GM12878 (cell line): ENCODE measurements at regions of chr20 and their contacts with region 1.

Region 1: GRCh38 chr20:38962044-38962927 is at the start of gene DHX35:
- DNase-seq: peak; percentile 91
- ATAC-seq: peak; percentile 98
- H3K4me3 ChIP-seq: peak within 1 kb of the TSS; percentile 88
- H3K27ac ChIP-seq: peak within 1 kb of the TSS; percentile 91
- H3K4me1 ChIP-seq: no peaks in the 10 kb centered on the region
- H3K27me3 ChIP-seq: no peaks in the 10 kb centered on the region
- CTCF ChIP-seq: peak; percentile 19 to 50 (median 38); a peak in 4 of 6 replicates
- EP300 ChIP-seq: peak in 1 of 2 experiments; percentile 34; a peak in 1 of 4 replicates
- POLR2A ChIP-seq: peak; percentile 90
- RAD21 ChIP-seq: peak; percentile 45; the same call in 1 of the 2 replicates
- polyA plus RNA-seq, gene DHX35: 4.3 to 4.4 TPM

Region 2: DNA sequence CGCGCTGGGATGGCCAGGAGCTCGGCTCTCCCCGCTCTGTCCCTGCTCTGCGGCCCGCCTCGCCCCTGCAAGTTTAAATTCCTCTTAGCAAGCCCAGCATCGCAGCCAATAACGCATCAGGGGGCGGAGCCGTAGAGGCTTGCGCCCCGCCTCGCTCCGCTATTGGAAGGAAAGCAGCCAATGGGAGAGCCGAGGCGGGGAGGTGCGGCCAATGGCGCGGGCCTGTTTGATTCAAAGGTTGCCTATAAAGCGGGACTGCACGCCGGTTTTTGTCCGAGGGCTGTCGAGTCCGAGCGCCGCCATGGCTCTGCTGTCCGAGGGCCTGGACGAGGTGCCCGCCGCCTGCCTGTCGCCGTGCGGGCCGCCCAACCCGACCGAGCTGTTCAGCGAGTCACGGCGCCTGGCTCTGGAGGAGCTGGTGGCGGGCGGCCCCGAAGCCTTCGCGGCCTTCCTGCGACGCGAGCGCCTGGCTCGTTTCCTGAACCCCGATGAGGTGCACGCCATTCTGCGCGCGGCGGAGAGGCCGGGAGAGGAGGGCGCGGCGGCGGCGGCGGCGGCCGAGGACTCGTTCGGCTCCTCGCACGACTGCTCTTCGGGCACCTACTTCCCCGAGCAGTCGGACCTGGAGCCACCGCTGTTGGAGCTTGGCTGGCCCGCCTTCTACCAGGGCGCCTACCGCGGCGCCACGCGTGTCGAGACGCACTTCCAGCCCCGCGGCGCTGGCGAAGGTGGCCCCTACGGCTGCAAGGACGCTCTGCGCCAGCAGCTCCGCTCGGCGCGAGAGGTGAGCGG is 35.9 kb before region 1 on chr20 and contains the start of gene FAM83D:
- CTCF ChIA-PET with region 1: interaction called, 24 read pairs
- POLR2A ChIA-PET with region 1: interaction called, 21 read pairs
- RAD21 ChIA-PET with region 1: interaction called, 66 read pairs
- SMC1A ChIA-PET with region 1: interaction called, 37 read pairs
- in situ Hi-C with region 1: no loop called
- intact Hi-C with region 1: no loop called
- DNase-seq: peak; percentile 92
- ATAC-seq: peak; percentile 96
- H3K4me3 ChIP-seq: peak within 1 kb of the TSS; percentile 78
- H3K27ac ChIP-seq: peak within 1 kb of the TSS; percentile 78
- H3K4me1 ChIP-seq: peaks cover 12% of the 10 kb centered on the region
- H3K27me3 ChIP-seq: no peaks in the 10 kb centered on the region
- CTCF ChIP-seq: no peak; a peak in 2 of 6 replicates
- EP300 ChIP-seq: no peak
- POLR2A ChIP-seq: peak; percentile 99
- RAD21 ChIP-seq: no peak; the same call in 1 of the 2 replicates
- polyA plus RNA-seq, gene FAM83D: 4.5 to 6.0 TPM

Region 3: DNA sequence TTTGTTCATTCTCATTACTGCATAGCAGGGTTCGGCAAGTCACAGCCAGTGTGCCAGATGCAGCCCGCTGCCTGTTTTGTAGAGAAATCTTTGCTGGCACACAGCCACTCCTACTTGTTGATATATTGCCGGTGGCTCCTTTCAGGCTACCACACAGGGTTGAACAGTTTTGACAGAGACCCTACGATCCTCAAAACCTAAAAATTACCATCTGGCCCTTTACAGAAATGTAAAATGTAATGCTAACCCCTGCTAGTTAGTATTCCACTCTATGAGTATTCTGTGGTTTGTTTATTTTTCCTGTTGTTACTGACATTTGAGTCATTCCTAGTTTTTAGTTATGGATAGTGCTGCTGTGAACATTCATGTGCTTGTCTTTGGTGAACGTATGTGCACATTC is 11.4 kb after region 1 on chr20:
- CTCF ChIA-PET with region 1: interaction called, 7 read pairs
- POLR2A ChIA-PET with region 1: interaction called, 23 read pairs
- RAD21 ChIA-PET with region 1: interaction called, 11 read pairs
- SMC1A ChIA-PET with region 1: interaction called, 237 read pairs
- in situ Hi-C with region 1: no loop called
- intact Hi-C with region 1: no loop called
- DNase-seq: no peak
- ATAC-seq: no peak
- H3K4me3 ChIP-seq: no peak overlapping the region
- H3K27ac ChIP-seq: peak overlapping the region; percentile 26
- H3K4me1 ChIP-seq: no peaks in the 10 kb centered on the region
- H3K27me3 ChIP-seq: no peaks in the 10 kb centered on the region
- CTCF ChIP-seq: no peak
- EP300 ChIP-seq: no peak
- POLR2A ChIP-seq: no peak
- RAD21 ChIP-seq: no peak

Region 4: GRCh38 chr20:38985603-38986170 is 23.4 kb after region 1 on chr20:
- CTCF ChIA-PET with region 1: interaction called, 37 read pairs
- POLR2A ChIA-PET with region 1: interaction called, 36 read pairs
- RAD21 ChIA-PET with region 1: interaction called, 75 read pairs
- SMC1A ChIA-PET with region 1: interaction called, 237 read pairs
- in situ Hi-C with region 1: no loop called
- intact Hi-C with region 1: no loop called
- DNase-seq: peak; percentile 20
- ATAC-seq: peak; percentile 58
- H3K4me3 ChIP-seq: no peak overlapping the region
- H3K27ac ChIP-seq: peak overlapping the region; percentile 17
- H3K4me1 ChIP-seq: peaks cover 34% of the 10 kb centered on the region
- H3K27me3 ChIP-seq: no peaks in the 10 kb centered on the region
- CTCF ChIP-seq: no peak
- EP300 ChIP-seq: no peak
- POLR2A ChIP-seq: no peak
- RAD21 ChIP-seq: no peak

Region 5: DNA sequence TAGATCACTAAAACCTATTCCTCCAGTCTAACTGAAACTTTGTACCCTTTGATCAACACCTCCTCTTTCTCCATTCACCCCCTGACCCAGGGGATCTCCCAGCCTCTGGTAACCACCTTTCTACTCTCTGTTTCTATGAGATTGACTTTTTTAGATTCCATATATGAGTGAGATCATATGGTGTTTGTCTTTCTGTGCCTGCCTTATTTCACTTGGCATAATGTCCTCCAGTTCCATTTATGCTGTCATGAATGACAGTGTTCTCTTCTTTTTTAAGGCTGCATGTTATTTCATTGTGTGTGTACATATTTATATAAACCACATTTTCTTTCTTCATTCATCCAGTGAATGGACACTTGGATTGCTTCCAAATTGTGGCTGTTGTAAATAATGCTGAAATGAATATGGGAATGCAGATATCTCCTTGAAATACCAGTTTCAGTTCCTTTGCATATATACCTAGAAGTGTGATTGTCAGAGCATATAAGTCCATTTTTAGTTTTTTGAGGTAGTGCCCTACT is 57.6 kb after region 1 on chr20:
- CTCF ChIA-PET with region 1: interaction called, 7 read pairs
- POLR2A ChIA-PET with region 1: interaction called, 9 read pairs
- RAD21 ChIA-PET with region 1: interaction called, 10 read pairs
- SMC1A ChIA-PET with region 1: interaction called, 10 read pairs
- in situ Hi-C with region 1: no loop called
- intact Hi-C with region 1: loop called (anchors 1 kb)
- DNase-seq: peak; percentile 79
- ATAC-seq: peak; percentile 92
- H3K4me3 ChIP-seq: peak overlapping the region; percentile 29; the same call in 1 of the 2 replicates
- H3K27ac ChIP-seq: peak overlapping the region; percentile 53
- H3K4me1 ChIP-seq: peaks cover 41% of the 10 kb centered on the region
- H3K27me3 ChIP-seq: no peaks in the 10 kb centered on the region
- CTCF ChIP-seq: no peak
- EP300 ChIP-seq: peak; percentile 44 to 65; a peak in 2 of 4 replicates
- POLR2A ChIP-seq: no peak
- RAD21 ChIP-seq: no peak